Prostate gland (tissue), 2 donors: ENCODE measurements at regions of chr18 and their contacts with region 1.

Region 1: GRCh38 chr18:3447895-3448837 is 1.8 kb upstream of the TGIF1 start:
- DNase-seq: peak; percentile 97
- H3K4me3 ChIP-seq: peak overlapping the region; percentile 67 to 91
- H3K27ac ChIP-seq: peak overlapping the region; percentile 99
- H3K4me1 ChIP-seq: no peaks in the 10 kb centered on the region
- H3K27me3 ChIP-seq: no peaks in the 10 kb centered on the region
- CTCF ChIP-seq: peak in 2 of 4 experiments; percentile 15 to 24
- POLR2A ChIP-seq: peak; percentile 90

Region 2: GRCh38 chr18:3255611-3256165 is 192.5 kb before region 1 on chr18:
- intact Hi-C with region 1: loop called (anchors 2 kb)
- DNase-seq: no peak
- H3K4me3 ChIP-seq: no peak overlapping the region
- H3K27ac ChIP-seq: peak overlapping the region in 1 of 2 donors; percentile 45
- H3K4me1 ChIP-seq: peaks cover under 1% of the 10 kb centered on the region
- H3K27me3 ChIP-seq: no peaks in the 10 kb centered on the region
- CTCF ChIP-seq: no peak
- POLR2A ChIP-seq: no peak

Region 3: DNA sequence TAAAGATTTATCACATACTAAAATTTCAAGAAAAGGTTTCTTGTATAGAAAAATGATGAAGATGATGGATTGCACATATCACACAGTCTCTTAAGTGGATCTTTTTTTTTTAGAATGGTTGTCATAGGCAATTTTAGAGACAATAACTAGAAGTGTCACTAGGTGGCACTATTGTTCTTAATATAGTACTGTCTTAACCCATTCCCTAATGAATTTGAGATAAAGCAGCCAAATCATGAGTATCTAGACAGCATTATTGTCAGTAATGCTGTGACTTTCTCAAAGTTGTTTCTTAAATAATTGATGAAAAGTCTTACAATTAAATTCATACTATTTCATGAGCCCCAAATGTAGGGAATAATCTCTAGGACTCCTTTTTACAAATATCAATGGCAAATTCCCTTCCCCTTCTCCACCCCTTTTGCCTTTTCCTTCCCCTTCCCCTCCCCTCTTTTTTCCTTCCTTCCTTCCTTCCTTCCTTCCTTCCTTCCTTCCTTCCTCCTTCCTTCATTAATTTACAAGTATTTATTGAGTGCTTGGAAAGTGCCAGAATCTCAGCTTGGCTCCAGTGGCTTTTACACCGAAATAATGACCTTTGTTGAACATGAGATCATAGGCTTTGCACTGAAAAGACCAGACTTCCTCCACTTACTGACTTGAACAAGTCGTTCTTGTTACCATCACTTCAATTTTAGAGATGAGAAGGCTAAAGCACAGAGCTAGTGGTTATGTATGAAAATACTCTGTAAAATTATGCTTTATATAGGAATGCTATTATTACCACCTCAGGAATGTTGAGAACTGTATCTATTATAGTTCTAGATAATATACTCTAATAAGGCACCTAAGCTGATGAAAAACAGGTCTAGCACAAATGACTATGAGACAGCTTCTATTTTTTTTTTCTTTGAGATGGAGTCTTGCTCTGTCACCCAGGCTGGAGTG is 166.4 kb before region 1 on chr18:
- intact Hi-C with region 1: loop called (anchors 5 kb)
- DNase-seq: peak; percentile 50
- H3K4me3 ChIP-seq: no peak overlapping the region
- H3K27ac ChIP-seq: peak overlapping the region; percentile 17 to 78
- H3K4me1 ChIP-seq: peaks cover 5% of the 10 kb centered on the region
- H3K27me3 ChIP-seq: no peaks in the 10 kb centered on the region
- CTCF ChIP-seq: peak; percentile 26 to 88 (median 84)
- POLR2A ChIP-seq: no peak

Region 4: DNA sequence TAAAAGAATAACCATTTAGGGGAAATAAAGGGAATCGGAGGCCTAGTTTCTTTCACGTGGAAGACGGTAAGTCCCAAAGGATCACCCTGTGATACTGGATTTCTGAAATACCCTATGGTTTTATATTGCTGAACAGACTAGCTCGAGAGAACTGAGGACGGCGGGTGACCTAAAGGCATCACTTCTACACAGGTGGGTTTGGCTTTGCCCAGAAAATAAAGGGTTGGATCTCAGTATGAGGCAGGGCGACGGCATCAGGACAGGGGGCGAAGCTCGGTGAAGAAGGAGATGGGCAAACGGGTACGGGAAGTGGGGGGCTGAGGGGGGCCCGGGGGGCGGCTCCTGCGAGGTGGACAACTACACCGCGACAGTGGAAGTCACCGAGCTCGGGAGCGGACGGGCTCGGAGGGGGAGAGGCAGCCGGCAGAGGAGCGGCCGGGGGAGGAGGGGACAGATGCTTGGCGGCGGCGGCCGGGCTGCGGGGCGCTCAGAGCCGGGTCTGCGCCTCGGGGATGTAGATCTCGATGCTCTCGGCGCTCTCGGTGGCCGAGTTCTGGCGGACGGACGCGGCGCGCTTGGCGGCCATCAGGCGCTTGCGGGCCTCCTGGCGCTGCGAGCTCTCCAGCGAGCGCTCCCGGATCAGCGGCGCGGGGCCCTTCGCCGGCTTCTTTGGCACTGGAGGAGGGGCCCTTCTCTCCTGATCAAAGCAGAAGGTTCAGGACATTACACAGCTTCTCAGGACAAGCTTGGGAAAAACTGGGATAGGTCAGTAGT is 50.7 kb after region 1 on chr18:
- intact Hi-C with region 1: no loop called
- DNase-seq: peak; percentile 12
- H3K4me3 ChIP-seq: peak overlapping the region; percentile 23 to 30
- H3K27ac ChIP-seq: no peak overlapping the region
- H3K4me1 ChIP-seq: no peaks in the 10 kb centered on the region
- H3K27me3 ChIP-seq: no peaks in the 10 kb centered on the region
- CTCF ChIP-seq: no peak
- POLR2A ChIP-seq: no peak

Region 5: DNA sequence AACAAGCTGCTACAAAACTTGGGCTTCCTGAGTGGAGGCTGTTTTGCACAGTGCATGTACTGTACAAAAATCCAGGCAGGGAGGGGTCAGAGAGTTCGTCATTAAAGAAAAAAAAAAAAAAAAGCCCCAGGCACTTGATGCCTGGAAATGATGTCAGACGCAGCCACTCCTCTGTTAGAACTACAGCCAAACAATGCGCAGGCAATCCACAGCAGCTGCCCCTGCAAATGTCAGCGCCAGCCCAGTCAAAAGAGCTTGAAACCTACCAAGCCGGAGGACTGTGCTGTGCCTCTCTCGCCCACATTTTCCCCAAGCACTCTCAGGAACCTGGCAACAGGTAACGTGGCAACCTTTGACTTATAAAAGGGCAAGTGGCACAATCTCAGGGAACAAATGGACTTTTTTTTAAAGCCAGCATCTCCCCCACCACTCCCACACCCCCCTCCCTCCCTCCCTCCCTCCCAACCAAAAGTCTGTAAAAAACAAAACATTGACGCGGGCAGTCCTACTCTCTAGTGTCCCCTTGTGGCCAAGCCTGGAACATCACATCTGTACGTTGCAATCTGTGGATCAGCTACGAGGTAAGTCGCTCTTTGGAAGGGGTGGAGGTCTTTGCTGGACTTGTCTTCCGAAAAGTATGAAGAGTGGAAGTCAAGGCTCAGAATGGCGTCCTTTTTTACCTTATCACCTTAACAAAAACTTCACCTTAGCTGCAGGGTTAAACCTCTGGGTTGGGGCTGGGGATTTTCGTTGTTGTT is 145.9 kb after region 1 on chr18:
- intact Hi-C with region 1: loop called (anchors 1 kb)
- DNase-seq: peak; percentile 90
- H3K4me3 ChIP-seq: peak overlapping the region; percentile 27 to 40
- H3K27ac ChIP-seq: peak overlapping the region; percentile 95 to 96
- H3K4me1 ChIP-seq: peaks cover 7% of the 10 kb centered on the region
- H3K27me3 ChIP-seq: no peaks in the 10 kb centered on the region
- CTCF ChIP-seq: peak; percentile 86 to 98 (median 95)
- POLR2A ChIP-seq: peak; percentile 24

Region 6: DNA sequence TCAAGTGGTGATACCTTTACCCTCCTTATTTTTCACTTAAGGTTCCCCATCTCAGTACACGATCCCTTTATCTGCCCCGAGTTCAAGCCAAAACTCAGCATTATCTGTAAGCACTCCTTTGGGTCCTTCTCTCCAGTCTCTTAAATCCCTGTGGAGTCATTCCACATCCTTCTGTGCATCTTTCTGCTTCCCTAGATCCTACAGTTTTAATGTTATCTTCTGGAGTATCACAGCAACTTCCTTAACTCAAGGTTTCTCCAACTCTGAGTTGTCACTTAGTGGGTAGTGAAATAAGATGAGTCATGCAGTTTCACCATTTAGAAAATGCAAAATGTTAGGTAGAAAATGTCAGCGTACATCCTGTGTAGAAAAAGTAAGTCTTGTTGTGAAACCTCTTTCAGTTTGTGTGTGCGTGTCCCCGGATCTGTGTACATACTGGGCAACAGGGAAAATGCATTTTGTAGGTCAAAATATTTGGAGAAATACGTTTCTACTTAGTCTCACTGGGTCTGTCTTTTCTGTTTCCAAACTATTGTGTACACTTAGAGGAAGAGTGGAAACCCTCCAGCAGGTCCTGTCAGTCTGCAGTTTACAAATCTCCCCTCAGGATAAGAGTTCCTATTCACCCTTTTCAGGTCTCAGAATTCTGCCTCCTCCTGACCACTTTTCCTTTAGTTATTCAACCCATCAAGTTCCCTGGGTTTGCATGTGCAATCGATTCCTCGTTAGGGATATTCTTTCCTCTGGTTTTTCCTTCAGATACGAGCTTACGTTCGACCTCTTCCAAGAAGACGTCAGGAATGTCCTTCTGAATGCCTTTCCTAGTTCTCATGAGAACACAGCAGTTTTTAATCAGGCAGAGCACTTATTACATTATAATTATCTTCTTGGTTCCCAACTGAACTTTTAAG is 156.6 kb after region 1 on chr18:
- intact Hi-C with region 1: loop called (anchors 2 kb)
- DNase-seq: no peak
- H3K4me3 ChIP-seq: peak overlapping the region in 1 of 2 donors; percentile 12
- H3K27ac ChIP-seq: peak overlapping the region; percentile 85 to 88
- H3K4me1 ChIP-seq: peaks cover 20% of the 10 kb centered on the region
- H3K27me3 ChIP-seq: no peaks in the 10 kb centered on the region
- CTCF ChIP-seq: no peak
- POLR2A ChIP-seq: no peak

Region 7: GRCh38 chr18:3665780-3666525 is 217.8 kb after region 1 on chr18:
- intact Hi-C with region 1: loop called (anchors 5 kb)
- DNase-seq: peak; percentile 85
- H3K4me3 ChIP-seq: no peak overlapping the region
- H3K27ac ChIP-seq: peak overlapping the region; percentile 57 to 62
- H3K4me1 ChIP-seq: no peaks in the 10 kb centered on the region
- H3K27me3 ChIP-seq: no peaks in the 10 kb centered on the region
- CTCF ChIP-seq: peak; percentile 76 to 96 (median 95)
- POLR2A ChIP-seq: no peak